Sciatic nerve (tissue), 2 donors: ENCODE measurements at regions of chr10 and their contacts with region 1.

Region 1: GRCh38 chr10:126867567-126868365 is 37.5 kb upstream of the DOCK1 start:
- DNase-seq: no peak
- ATAC-seq: no peak

Region 2: DNA sequence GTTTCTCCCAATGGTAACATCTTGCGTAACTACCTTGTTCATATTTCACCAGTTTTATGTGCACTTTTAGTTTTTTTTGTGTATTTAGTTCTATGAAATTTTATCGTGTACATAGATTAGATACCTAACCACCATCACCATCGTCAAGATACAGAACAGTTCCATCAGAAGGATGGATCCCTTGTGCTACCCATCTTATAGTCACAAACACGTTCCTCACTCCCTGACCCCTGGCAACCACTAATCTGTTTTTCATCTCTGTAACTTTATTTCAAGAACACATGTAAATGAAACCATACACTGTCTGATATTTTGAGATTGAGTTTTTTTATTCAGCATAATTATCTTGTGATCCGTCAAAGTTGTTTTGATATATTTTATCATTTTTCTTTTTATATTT is 941.5 kb before region 1 on chr10:
- intact Hi-C with region 1: no loop called
- DNase-seq: no peak
- ATAC-seq: no peak

Region 3: GRCh38 chr10:126342702-126343101 is 525.1 kb before region 1 on chr10:
- intact Hi-C with region 1: no loop called
- DNase-seq: no peak
- ATAC-seq: no peak

Region 4: GRCh38 chr10:126939706-126940105 is 71.9 kb after region 1 on chr10:
- intact Hi-C with region 1: loop called (anchors 2 kb)
- DNase-seq: no peak
- ATAC-seq: peak; percentile 51